ENCODE measurements at regions of chr3 and their contacts with region 1.

Region 1: DNA sequence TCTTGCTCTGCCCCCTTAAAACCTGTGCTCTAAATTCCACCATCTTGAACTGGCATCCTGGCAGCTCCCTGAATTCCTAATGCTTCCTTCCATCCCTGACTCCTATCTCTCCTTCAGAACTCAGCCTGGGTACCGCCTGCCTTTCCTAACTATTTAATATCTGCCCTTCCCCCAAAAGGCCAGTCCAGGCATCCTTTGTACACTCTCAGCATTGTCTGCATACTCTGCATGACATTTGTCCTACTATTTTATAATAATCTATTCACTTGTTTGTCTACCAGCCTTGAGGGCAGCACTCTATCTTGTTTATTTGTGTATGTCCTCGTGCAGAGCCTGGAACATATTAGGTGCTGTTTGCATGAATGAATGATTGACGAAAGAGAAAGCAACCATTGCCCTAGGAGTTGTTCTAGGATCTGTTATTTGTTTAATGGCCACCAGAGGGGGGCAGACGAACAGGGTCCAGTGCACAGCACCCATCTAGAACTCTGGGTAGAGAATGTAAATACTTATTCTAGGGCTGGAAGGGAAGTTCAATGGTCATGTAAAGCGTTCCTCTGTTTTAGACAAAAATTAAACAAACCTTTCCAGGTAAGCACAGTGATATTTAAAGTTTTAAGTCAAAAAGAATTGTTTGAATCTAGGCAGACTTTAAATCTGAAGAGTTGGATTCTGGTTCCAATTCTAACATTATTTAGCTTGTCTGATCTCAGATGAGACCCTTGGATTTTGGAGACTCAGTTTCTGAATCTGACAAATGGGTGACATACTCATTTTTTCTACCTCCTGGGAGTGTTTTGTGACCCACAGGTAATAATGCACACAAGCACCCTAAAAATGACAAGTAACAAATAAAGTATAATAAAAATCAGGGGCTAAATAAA is 125.8 kb upstream of the GALNT15 start:
- DNase-seq: peak in 3 of 5 donors; percentile 35 to 63 (median 57)
- ATAC-seq: peak; percentile 83 to 91 (median 87)
- H3K4me3 ChIP-seq: peak overlapping the region in 3 of 12 donors; percentile 26 to 44 (median 30)
- H3K27ac ChIP-seq: no peak overlapping the region
- H3K4me1 ChIP-seq: peaks cover 0 to 23% (median 12%) of the 10 kb centered on the region in 12 donors
- H3K27me3 ChIP-seq: no peaks in the 10 kb centered on the region
- CTCF ChIP-seq: peak; percentile 72 to 94 (median 82)
- POLR2A ChIP-seq: no peak

Region 2: GRCh38 chr3:15629860-15630597 is 418.6 kb before region 1 on chr3:
- intact Hi-C with region 1: loop called in 1 of 10 experiments (anchors 10 kb)
- DNase-seq: peak in 4 of 5 donors; percentile 40 to 61 (median 52)
- ATAC-seq: peak; percentile 73 to 95 (median 92)
- H3K4me3 ChIP-seq: peak overlapping the region in 9 of 12 donors; percentile 10 to 46 (median 30)
- H3K27ac ChIP-seq: peak overlapping the region in 7 of 12 donors; percentile 35 to 65 (median 48)
- H3K4me1 ChIP-seq: peaks cover 0 to 31% (median 20%) of the 10 kb centered on the region in 12 donors
- H3K27me3 ChIP-seq: no peaks in the 10 kb centered on the region
- CTCF ChIP-seq: peak; percentile 54 to 87 (median 79)
- POLR2A ChIP-seq: no peak

Region 3: DNA sequence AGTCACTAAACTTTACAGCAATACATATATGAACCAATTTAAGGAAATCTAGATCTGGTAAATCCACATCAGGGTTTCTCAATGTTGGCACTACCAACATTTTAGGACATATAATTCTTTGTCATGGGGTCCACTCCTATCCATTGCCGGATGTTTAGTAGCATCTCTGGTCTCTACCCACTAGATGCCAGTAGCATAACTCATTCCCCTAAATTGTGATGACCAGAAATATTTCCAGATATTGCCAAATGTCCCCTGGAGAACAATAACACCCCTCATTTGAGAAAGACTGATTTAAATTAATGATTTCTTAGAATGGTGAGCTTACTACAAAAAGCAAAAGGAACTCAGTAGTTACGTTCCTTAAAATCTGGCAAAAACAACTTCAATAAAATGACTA is 227.8 kb before region 1 on chr3:
- intact Hi-C with region 1: loop called (anchors 2 to 10 kb)
- DNase-seq: no peak
- ATAC-seq: no peak
- H3K4me3 ChIP-seq: no peak overlapping the region
- H3K27ac ChIP-seq: no peak overlapping the region
- H3K4me1 ChIP-seq: peaks cover 0 to 21% (median 6%) of the 10 kb centered on the region in 12 donors
- H3K27me3 ChIP-seq: no peaks in the 10 kb centered on the region
- CTCF ChIP-seq: no peak
- POLR2A ChIP-seq: no peak

Region 4: GRCh38 chr3:15919971-15920370 is 128.7 kb before region 1 on chr3:
- intact Hi-C with region 1: no loop called
- DNase-seq: no peak
- ATAC-seq: no peak
- H3K4me3 ChIP-seq: no peak overlapping the region
- H3K27ac ChIP-seq: no peak overlapping the region
- H3K4me1 ChIP-seq: no peaks in the 10 kb centered on the region
- H3K27me3 ChIP-seq: no peaks in the 10 kb centered on the region
- CTCF ChIP-seq: no peak
- POLR2A ChIP-seq: no peak

Region 5: GRCh38 chr3:16124636-16125035 is 76.0 kb after region 1 on chr3:
- intact Hi-C with region 1: loop called in 1 of 10 experiments (anchors 5 kb)
- DNase-seq: no peak
- ATAC-seq: peak in 1 of 4 donors; percentile 42
- H3K4me3 ChIP-seq: no peak overlapping the region
- H3K27ac ChIP-seq: peak overlapping the region in 1 of 12 donors; percentile 37
- H3K4me1 ChIP-seq: peaks cover 0 to 18% (median 2%) of the 10 kb centered on the region in 12 donors
- H3K27me3 ChIP-seq: no peaks in the 10 kb centered on the region
- CTCF ChIP-seq: no peak
- POLR2A ChIP-seq: no peak

Region 6: DNA sequence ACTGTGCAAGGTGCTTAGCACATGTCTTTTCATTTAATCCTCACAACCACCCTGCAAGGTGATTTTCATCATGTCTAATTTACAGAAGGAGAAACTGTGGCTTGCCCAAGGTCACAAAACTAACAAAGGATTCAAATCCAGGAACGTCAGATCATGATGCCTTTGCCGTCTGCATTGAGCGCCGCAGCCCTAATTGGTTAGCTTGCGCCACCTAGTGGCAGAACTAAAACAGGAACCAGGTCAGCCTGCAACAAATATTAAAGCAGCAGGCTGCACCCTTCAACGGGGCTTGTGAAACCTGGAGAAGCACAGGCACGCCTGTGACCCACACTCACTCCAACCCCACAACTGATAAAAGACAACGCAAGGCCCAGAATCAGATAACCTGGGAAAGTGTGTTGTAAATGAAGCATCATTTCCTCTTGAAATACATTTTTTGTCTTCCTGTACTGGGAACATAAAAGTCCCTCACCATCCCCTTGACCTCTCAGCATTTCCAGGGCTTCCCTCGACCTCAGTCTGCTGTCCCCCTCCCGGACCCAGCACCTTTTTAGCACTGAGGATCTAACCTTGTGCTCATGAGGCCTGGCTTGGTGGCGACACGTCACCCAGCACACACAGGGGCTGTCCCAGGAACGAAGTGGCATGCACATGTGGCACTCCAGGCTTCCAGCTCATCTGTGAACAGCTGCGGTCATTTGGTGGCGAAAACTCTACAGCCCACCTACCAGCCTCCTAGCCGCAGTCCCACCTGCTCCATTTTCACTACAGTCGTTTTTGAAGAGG is 198.8 kb after region 1 on chr3:
- intact Hi-C with region 1: loop called (anchors 1 to 2 kb)
- DNase-seq: peak; percentile 75 to 86 (median 79)
- ATAC-seq: peak; percentile 40 to 68 (median 65)
- H3K4me3 ChIP-seq: no peak overlapping the region
- H3K27ac ChIP-seq: no peak overlapping the region
- H3K4me1 ChIP-seq: peaks cover 0 to 28% (median 13%) of the 10 kb centered on the region in 12 donors
- H3K27me3 ChIP-seq: no peaks in the 10 kb centered on the region
- CTCF ChIP-seq: peak; percentile 85 to 98 (median 94)
- POLR2A ChIP-seq: no peak